ENCODE measurements at regions of chr10 and their contacts with region 1.

Region 1: DNA sequence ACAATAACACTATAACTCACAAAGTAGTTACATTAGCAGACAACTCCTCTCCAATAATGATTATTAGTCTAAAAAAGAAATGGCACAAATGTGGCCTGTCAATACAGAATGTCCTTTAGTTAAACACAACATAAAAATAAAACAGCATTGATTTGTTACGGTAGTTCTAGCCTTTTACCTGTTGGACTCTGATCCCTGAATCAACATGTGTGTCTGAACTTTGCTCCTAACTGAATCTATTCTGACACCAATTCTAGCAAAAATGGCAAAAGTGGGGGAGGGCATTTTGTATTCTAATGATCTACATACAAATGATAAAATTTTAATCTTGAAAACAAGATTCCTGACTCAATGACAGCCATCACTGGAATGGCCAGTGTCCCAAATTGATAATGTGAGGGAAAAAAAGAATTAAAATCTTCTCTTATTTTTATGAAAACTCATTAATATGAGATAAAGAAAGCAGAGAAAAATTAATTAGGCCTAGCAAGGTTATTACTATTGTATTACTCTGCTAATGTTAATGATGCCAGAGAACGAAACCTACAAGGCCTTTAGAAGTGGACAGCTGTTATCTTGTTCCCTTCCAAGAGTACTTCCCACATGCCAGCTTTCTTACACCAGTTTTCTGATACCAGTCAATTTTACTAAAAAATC is 30.2 kb downstream of the FRA10AC1 start:
- DNase-seq: peak; percentile 61
- ATAC-seq: no peak; the same call in 2 of the 3 replicates
- H3K4me3 ChIP-seq: no peak overlapping the region
- H3K27ac ChIP-seq: peak overlapping the region; percentile 48
- H3K4me1 ChIP-seq: peaks cover 35% of the 10 kb centered on the region
- H3K27me3 ChIP-seq: no peaks in the 10 kb centered on the region
- CTCF ChIP-seq: no peak
- EP300 ChIP-seq: peak in 1 of 2 experiments; percentile 80; a peak in 2 of 4 replicates
- POLR2A ChIP-seq: no peak
- RAD21 ChIP-seq: no peak

Region 2: DNA sequence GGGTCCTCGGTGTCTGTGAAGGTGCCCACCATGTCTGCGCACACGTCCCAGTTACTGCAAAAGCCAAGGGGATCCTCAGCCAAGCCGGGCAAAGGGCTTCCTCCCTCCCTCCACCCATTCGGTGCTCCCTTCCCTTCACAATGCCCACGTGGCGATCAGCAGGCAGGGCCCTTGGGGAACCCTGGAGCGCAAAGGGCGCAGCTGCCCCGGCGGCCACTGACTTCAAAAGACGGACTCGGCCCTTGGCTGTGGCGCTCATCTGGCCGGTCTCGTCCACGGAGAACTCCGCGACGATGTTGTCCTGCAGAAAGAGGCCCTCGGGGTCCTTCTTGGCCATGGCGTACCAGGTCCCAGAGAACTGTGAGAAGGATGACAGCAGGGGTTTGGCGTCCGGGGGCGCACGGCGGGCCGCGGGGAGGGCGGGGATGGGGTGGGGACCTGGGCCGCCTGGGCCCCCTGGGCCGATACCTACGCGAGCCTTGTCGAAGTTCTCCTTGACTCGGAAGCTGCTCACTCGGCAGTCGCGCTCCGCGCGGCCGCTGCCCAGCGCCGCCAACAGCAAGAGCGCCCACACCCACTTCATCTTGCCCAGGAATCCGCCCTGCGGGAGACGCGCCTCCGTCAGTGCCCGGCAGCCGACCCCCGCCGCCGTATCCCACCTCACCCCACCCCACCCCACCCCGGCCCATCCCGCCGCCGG is 71.6 kb before region 1 on chr10:
- CTCF ChIA-PET with region 1: no interaction called
- POLR2A ChIA-PET with region 1: interaction called, 6 read pairs
- in situ Hi-C with region 1: no loop called
- intact Hi-C with region 1: loop called (anchors 5 kb)
- DNase-seq: no peak
- ATAC-seq: peak; percentile 17
- H3K4me3 ChIP-seq: peak overlapping the region; percentile 79 to 87 (median 84)
- H3K27ac ChIP-seq: peak overlapping the region; percentile 99
- H3K4me1 ChIP-seq: peaks cover 69% of the 10 kb centered on the region
- H3K27me3 ChIP-seq: no peaks in the 10 kb centered on the region; a peak in 1 of 5 replicates
- CTCF ChIP-seq: peak; percentile 4; the same call in 1 of the 2 replicates
- EP300 ChIP-seq: no peak
- POLR2A ChIP-seq: peak; percentile 16 to 37; a peak in 1 of 4 replicates
- RAD21 ChIP-seq: no peak

Measured in HepG2 (cell line).